ENCODE measurements at regions of chr3 and their contacts with region 1.

Region 1: GRCh38 chr3:61561374-61562041 is at the start of gene PTPRG:
- DNase-seq: peak; percentile 91
- total RNA-seq, gene PTPRG: 34.3 TPM

Region 2: GRCh38 chr3:60588806-60589205 is 972.7 kb before region 1 on chr3:
- intact Hi-C with region 1: no loop called
- DNase-seq: no peak

Region 3: DNA sequence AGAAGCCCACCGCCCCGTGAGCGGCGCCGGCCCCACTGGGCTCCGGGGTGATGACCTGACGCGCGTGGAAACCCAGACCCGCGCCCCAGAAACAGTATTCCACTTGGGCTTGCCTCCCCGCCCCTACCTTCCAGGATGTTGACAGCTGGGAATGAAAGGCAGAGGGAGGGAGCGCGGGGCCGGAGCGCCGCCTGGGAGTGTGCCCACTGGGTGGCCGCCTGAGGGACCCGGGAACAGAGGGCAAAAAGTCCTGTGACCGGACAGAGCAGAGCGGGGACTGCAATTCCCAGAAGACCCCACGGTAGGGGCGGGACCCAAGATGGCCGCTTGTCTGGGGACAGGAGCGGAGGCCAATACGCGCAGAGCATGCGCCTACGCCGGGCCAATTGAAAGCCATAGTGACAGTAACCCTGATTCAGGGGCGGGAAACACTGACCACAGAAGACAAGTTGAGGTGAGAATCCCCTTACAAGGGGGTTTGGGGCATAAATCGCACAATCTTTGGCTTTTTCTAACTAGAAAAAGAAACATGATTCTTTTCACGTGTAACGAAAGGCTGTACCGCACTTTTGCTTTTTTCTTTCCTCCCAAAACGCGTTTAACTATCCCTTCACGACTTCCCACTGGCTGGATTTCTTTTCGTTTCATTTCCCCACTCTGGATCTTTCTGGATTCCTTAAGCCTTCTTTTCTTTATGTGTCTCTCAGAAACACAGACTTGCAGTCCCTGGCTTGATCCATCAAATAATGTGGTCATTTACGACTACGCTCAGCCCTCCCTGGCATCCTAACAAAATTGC is 310.1 kb before region 1 on chr3 and contains the start of gene FHIT:
- intact Hi-C with region 1: loop called (anchors 5 kb)
- DNase-seq: peak; percentile 97
- total RNA-seq, gene FHIT: 16.6 TPM

Region 4: GRCh38 chr3:61387817-61388216 is 173.7 kb before region 1 on chr3:
- intact Hi-C with region 1: no loop called
- DNase-seq: no peak

Region 5: DNA sequence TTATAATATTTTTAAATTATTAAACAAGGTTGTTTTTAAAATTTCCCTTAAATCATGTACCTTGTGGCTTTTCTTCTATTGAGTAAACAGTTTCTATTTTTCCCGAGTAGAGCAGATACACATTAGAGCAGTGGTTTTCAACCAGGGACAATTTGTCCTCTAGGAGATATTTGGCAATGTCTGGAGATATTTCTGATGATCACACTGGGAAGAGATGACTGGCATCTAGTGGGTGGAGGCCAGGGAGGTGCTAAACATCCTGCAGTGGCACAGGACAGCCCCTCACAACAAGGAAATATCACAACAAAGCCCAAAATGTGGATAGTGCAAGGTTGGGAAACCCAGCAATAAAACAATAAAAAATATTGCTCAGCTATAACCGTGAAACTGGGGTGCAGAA is 113.1 kb before region 1 on chr3:
- intact Hi-C with region 1: no loop called
- DNase-seq: no peak

Region 6: DNA sequence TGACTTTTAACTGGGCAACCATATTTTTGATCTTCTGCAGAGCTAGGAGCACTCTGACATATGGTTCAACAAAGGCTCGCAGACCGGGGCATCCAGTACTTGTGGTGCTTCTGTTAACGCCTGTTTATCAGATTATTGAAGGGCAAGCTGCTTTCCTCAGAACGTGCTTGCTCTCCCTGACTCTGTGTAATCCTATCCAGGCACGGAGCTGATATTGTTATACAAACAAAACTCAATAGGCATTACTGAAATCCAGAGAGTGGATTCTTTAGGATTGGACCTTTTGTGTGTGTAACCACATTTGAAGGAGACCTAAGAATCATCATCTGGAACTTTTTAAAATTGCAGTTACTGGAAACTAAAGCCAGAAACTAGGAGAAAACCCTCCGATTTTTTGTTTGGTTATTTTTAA is 246.4 kb after region 1 on chr3:
- intact Hi-C with region 1: loop called (anchors 2 kb)
- DNase-seq: no peak

Region 7: DNA sequence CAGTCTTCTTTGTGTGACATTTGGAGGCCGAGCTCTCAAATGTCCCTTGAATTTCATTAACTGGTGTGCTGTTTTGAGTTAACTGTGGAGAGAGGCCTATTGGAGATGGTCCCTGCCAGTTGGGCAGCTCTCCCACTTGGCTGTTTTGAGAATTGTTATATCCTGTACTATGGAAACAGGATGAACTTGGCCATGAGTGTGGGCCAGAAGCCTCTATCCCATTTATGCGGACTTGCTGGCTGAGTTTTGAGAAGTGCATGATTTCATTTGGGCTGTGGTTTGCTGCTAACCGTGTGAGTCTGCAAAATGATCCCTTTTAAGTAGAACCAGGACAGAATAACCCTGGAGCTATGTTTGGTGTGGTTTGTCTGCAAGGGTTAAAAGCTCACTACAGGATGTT is 365.8 kb after region 1 on chr3:
- intact Hi-C with region 1: loop called (anchors 5 kb)
- DNase-seq: peak; percentile 87

Region 8: GRCh38 chr3:62188681-62189383 is 627.3 kb after region 1 on chr3:
- intact Hi-C with region 1: loop called (anchors 2 kb)
- DNase-seq: no peak